Activated CD4-positive, alpha-beta T cell treated with anti-CD3 and anti-CD28 coated beads for 36 hours (primary cell): ENCODE measurements at regions of chr16 and their contacts with region 1.

Region 1: GRCh38 chr16:6081320-6081976 is 983.9 kb upstream of the EEF2KMT start:
- DNase-seq: peak; percentile 53
- ATAC-seq: no peak
- H3K4me3 Mint-ChIP-seq: no peak overlapping the region
- H3K27ac Mint-ChIP-seq: no peak overlapping the region
- H3K4me1 Mint-ChIP-seq: no peaks in the 10 kb centered on the region
- H3K27me3 Mint-ChIP-seq: no peaks in the 10 kb centered on the region

Region 2: GRCh38 chr16:5296176-5296575 is 785.3 kb before region 1 on chr16:
- CTCF ChIA-PET with region 1: no interaction called
- POLR2A ChIA-PET with region 1: no interaction called
- intact Hi-C with region 1: no loop called
- DNase-seq: no peak
- ATAC-seq: no peak
- H3K4me3 Mint-ChIP-seq: no peak overlapping the region
- H3K27ac Mint-ChIP-seq: no peak overlapping the region
- H3K4me1 Mint-ChIP-seq: no peaks in the 10 kb centered on the region
- H3K27me3 Mint-ChIP-seq: peaks cover 6% of the 10 kb centered on the region

Region 3: GRCh38 chr16:5502467-5502869 is 579.0 kb before region 1 on chr16:
- CTCF ChIA-PET with region 1: no interaction called
- POLR2A ChIA-PET with region 1: no interaction called
- intact Hi-C with region 1: loop called in 1 of 2 experiments (anchors 5 kb)
- DNase-seq: peak; percentile 21
- ATAC-seq: no peak
- H3K4me3 Mint-ChIP-seq: no peak overlapping the region
- H3K27ac Mint-ChIP-seq: no peak overlapping the region
- H3K4me1 Mint-ChIP-seq: no peaks in the 10 kb centered on the region
- H3K27me3 Mint-ChIP-seq: peaks cover 5% of the 10 kb centered on the region

Region 4: DNA sequence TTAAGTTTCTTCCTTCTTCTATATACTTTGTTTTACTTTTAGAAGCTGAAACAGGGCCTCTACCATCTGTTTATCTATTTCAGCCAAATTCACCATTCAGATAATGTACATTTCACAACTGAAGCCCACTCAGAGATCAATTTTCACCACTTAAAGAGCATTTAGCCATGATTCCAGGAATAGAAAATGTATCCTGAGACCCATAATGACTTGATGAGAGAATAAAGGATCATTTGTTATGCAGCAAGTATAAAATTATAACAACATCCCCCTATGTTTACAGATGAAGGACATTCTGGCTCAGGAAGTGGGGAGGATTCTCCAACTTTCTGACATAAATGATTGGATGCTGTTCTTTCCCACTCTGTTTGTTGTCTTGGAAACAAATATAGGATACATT is 21.8 kb before region 1 on chr16:
- CTCF ChIA-PET with region 1: no interaction called
- POLR2A ChIA-PET with region 1: no interaction called
- intact Hi-C with region 1: no loop called
- DNase-seq: no peak
- ATAC-seq: no peak
- H3K4me3 Mint-ChIP-seq: no peak overlapping the region
- H3K27ac Mint-ChIP-seq: no peak overlapping the region
- H3K4me1 Mint-ChIP-seq: no peaks in the 10 kb centered on the region
- H3K27me3 Mint-ChIP-seq: no peaks in the 10 kb centered on the region

Region 5: GRCh38 chr16:6095414-6095813 is 14.0 kb after region 1 on chr16:
- CTCF ChIA-PET with region 1: no interaction called
- POLR2A ChIA-PET with region 1: no interaction called
- intact Hi-C with region 1: no loop called
- DNase-seq: no peak
- ATAC-seq: no peak
- H3K4me3 Mint-ChIP-seq: no peak overlapping the region
- H3K27ac Mint-ChIP-seq: no peak overlapping the region
- H3K4me1 Mint-ChIP-seq: no peaks in the 10 kb centered on the region
- H3K27me3 Mint-ChIP-seq: no peaks in the 10 kb centered on the region

Region 6: GRCh38 chr16:6132121-6132520 is 50.7 kb after region 1 on chr16:
- CTCF ChIA-PET with region 1: no interaction called
- POLR2A ChIA-PET with region 1: no interaction called
- intact Hi-C with region 1: no loop called
- DNase-seq: no peak
- ATAC-seq: no peak
- H3K4me3 Mint-ChIP-seq: no peak overlapping the region
- H3K27ac Mint-ChIP-seq: no peak overlapping the region
- H3K4me1 Mint-ChIP-seq: no peaks in the 10 kb centered on the region
- H3K27me3 Mint-ChIP-seq: no peaks in the 10 kb centered on the region